ENCODE measurements at regions of chr1 and their contacts with region 1.

Region 1: DNA sequence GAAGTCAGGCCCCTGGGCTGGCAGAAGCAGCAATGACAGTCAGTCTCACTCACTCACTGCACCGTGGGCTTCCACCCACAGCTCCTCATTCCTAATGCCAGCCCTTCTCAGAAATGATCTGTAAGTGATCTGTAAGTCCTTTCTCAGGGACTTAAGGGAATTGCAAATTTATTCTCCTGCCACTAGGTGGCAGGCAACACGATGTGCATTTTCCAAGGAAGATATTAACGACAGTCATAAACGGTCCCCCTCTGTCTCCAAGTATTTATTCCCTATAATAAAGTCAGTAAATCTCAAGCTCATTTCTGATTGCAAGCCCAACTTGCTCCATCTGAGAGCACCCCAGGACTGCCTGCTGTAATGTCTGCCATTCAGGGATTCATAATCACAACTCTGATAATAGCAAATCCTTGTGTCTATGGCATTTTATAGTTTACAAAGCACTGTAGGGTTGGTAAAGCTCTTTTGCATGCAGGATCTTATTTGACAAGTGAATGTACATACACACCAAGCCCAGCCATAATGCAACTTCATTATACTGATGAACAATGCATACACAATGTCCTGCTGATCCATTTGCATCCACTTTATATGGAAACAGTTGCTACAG is 380.6 kb upstream of the CAMK1G start:
- DNase-seq: peak; percentile 44
- H3K4me3 ChIP-seq: no peak overlapping the region
- H3K27ac ChIP-seq: no peak overlapping the region
- H3K4me1 ChIP-seq: no peaks in the 10 kb centered on the region
- CTCF ChIP-seq: peak; percentile 83

Region 2: DNA sequence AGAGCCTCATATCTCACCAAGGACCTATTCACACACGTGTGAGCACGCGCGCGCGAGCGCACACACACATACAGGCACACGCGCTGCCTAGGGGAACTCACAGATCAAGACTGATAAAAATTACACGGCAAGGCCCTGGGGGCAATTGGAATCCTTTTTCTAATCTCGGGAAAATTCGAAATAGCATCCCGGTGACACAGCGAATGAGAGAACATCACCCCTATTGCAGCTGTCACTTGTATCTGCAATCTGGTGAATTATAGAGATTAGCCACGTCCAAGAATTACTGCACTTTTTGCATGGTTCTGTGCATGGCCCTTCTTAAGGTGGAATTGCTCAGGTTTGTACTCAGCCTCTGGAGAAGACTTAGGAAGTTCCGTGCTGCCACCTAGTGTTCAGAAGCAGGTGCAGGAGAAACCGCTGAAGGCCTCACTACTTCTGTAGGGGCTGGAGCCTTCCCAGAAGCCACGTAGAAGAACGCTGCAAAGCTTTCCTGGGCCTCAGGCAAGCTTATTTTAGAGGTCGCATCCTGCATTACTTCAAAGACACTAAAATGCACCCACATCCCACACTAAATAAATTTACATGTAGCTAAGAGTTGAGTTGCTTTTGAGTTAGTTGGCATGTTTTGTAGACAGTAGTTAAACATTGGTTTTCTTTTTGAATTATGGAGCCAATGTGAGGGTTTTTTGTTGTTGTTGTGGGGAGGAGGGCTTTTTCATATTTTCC is 151.3 kb after region 1 on chr1:
- CTCF ChIA-PET with region 1: no interaction called
- POLR2A ChIA-PET with region 1: no interaction called
- intact Hi-C with region 1: loop called (anchors 5 kb)
- DNase-seq: peak; percentile 63
- H3K4me3 ChIP-seq: no peak overlapping the region
- H3K27ac ChIP-seq: no peak overlapping the region
- H3K4me1 ChIP-seq: no peaks in the 10 kb centered on the region
- CTCF ChIP-seq: peak; percentile 88